Heart left ventricle (tissue), 16 donors: ENCODE measurements at regions of chr11 and their contacts with region 1.

Region 1: DNA sequence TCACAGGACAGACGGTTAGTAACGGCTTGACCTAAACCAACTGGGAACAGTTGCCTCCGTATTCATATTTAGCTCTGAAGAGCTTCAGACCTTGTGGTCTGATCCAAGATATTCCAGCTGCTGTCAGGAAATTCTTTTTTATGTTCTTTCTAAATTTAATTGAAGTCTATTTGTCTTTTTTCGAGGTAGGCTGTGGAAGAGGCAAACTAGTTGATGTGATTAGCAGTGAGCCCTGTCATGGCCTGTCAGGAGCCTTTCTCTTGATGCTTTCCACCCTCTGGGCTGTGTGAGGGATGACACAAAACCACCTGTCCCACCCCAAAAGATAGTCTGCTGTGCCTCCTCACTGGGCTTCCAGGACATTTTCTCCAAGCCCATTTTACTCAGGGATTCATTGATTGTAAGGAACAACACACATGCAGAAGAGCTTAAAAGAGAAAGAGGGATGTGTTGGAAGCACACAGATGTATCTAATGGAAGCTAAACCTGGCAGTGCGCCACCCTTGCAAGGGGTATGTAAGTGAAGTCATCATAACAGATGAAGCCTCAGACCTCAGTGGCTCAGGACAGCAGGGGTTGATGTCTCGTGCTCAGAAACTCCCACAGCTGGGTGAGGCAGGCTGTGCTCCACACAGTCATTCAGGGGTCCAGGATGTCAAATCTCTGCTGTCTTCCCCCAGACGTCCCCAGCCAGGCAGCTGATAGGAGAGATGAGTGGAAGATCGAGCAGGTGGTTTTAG is 170.0 kb downstream of the NCAM1 start:
- DNase-seq: no peak
- ATAC-seq: no peak
- H3K4me3 ChIP-seq: no peak overlapping the region
- H3K27ac ChIP-seq: no peak overlapping the region
- H3K4me1 ChIP-seq: peaks cover 0 to 52% (median 18%) of the 10 kb centered on the region in 12 donors
- H3K27me3 ChIP-seq: no peaks in the 10 kb centered on the region
- CTCF ChIP-seq: no peak
- POLR2A ChIP-seq: no peak

Region 2: GRCh38 chr11:113077379-113077778 is 53.8 kb before region 1 on chr11:
- intact Hi-C with region 1: no loop called
- DNase-seq: no peak
- ATAC-seq: peak; percentile 42 to 54 (median 44)
- H3K4me3 ChIP-seq: no peak overlapping the region
- H3K27ac ChIP-seq: peak overlapping the region in 2 of 12 donors; percentile 18 to 69
- H3K4me1 ChIP-seq: peaks cover 0 to 41% (median 8%) of the 10 kb centered on the region in 12 donors
- H3K27me3 ChIP-seq: no peaks in the 10 kb centered on the region
- CTCF ChIP-seq: no peak
- POLR2A ChIP-seq: no peak

Region 3: GRCh38 chr11:113091481-113091780 is 39.8 kb before region 1 on chr11:
- intact Hi-C with region 1: loop called in 1 of 10 experiments (anchors 2 kb)
- DNase-seq: no peak
- ATAC-seq: peak in 2 of 4 donors; percentile 21 to 38
- H3K4me3 ChIP-seq: no peak overlapping the region
- H3K27ac ChIP-seq: peak overlapping the region in 9 of 12 donors; percentile 0 to 55 (median 26)
- H3K4me1 ChIP-seq: peaks cover 0 to 34% (median 8%) of the 10 kb centered on the region in 12 donors
- H3K27me3 ChIP-seq: no peaks in the 10 kb centered on the region
- CTCF ChIP-seq: no peak
- POLR2A ChIP-seq: no peak

Region 4: GRCh38 chr11:113189909-113190667 is 58.9 kb after region 1 on chr11:
- intact Hi-C with region 1: loop called in 1 of 10 experiments (anchors 5 kb)
- DNase-seq: peak in 2 of 5 donors; percentile 55 to 65
- ATAC-seq: peak; percentile 28 to 88 (median 66)
- H3K4me3 ChIP-seq: no peak overlapping the region
- H3K27ac ChIP-seq: peak overlapping the region in 2 of 12 donors; percentile 6 to 46
- H3K4me1 ChIP-seq: peaks cover 6 to 89% (median 58%) of the 10 kb centered on the region in 12 donors
- H3K27me3 ChIP-seq: no peaks in the 10 kb centered on the region
- CTCF ChIP-seq: no peak
- POLR2A ChIP-seq: no peak

Region 5: GRCh38 chr11:113253406-113253805 is 122.2 kb after region 1 on chr11:
- intact Hi-C with region 1: loop called in 1 of 10 experiments (anchors 2 kb)
- DNase-seq: no peak
- ATAC-seq: no peak
- H3K4me3 ChIP-seq: no peak overlapping the region
- H3K27ac ChIP-seq: no peak overlapping the region
- H3K4me1 ChIP-seq: peaks cover 0 to 21% (median 6%) of the 10 kb centered on the region in 12 donors
- H3K27me3 ChIP-seq: no peaks in the 10 kb centered on the region
- CTCF ChIP-seq: no peak
- POLR2A ChIP-seq: no peak